Common myeloid progenitor, CD34-positive (primary cell): ENCODE measurements at regions of chr2 and their contacts with region 1.

Region 1: DNA sequence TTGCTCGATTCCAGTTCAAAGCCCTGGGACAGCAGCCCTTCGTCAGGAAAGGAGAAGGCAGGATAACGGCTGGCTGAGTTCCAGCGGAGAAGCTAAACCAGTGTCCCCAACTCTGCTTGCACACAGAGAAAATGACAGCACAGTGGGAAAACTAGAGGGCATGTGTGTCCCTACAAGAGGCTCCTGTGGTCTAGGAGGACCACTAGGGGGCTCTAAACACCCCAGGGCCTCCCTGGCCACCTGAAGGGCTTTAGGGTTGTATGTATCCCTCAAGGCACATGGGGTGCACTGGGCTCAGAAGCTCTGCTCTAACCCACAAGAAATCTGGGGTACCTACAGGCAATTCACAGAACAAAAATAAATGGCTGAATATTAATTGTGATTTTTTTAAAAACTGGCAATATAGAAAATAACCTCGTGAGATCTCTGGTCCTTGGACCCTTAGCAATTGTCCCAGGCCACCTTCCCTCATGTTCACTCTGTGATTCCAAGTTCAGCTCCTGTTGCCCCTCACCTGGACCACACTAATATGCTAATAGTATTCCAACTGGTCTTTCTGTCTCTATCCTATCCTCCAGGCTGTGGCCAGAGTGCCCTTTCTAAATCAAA is 17.5 kb downstream of the STAT1 start:
- DNase-seq: peak; percentile 60 to 76 (median 74)
- H3K4me3 ChIP-seq: no peak overlapping the region
- H3K27ac ChIP-seq: no peak overlapping the region
- H3K4me1 ChIP-seq: no peaks in the 10 kb centered on the region
- H3K27me3 ChIP-seq: no peaks in the 10 kb centered on the region

Region 2: DNA sequence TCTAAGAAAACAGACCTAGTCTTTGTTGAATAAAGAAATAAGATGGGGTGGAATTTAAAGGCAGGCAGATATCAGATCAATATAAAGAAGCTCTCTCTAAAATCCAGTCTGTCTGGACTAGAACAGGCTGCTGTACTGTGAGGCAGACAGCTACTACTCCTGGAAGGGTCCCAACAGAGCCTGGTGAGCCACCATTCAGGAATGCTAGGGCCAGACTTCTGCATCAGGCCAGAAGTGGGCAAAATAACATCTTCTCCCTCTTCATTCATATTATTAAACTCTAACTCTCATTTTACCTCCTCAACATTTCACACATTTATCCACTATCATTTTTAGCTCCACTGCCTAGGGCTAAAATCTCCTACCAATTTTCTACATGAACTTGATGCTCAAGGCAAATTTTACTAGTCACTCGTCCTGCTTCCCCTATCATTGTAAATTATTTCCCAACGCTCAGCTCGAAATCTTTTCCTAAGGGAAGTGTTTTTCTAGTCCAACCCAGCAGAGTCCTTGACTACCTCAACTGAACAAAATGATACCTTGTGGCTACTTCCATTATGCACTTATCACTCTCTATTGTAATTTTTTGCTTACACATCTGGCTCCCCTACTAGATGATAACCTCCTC is 161.0 kb before region 1 on chr2:
- CTCF ChIA-PET with region 1: no interaction called
- POLR2A ChIA-PET with region 1: no interaction called
- DNase-seq: no peak
- H3K4me3 ChIP-seq: no peak overlapping the region
- H3K27ac ChIP-seq: no peak overlapping the region
- H3K4me1 ChIP-seq: no peaks in the 10 kb centered on the region
- H3K27me3 ChIP-seq: no peaks in the 10 kb centered on the region

Region 3: GRCh38 chr2:190986221-190986953 is 10.1 kb before region 1 on chr2:
- CTCF ChIA-PET with region 1: interaction called, 11 read pairs
- POLR2A ChIA-PET with region 1: no interaction called
- DNase-seq: peak; percentile 41 to 79 (median 77)
- H3K4me3 ChIP-seq: peak overlapping the region in 1 of 7 experiments; percentile 34
- H3K27ac ChIP-seq: no peak overlapping the region
- H3K4me1 ChIP-seq: peaks cover 0 to 22% (median 8%) of the 10 kb centered on the region in 4 experiments
- H3K27me3 ChIP-seq: no peaks in the 10 kb centered on the region

Region 4: GRCh38 chr2:191012845-191013681 is 16.6 kb after region 1 on chr2:
- CTCF ChIA-PET with region 1: interaction called, 10 read pairs
- POLR2A ChIA-PET with region 1: no interaction called
- DNase-seq: peak in 1 of 3 donors; percentile 34
- H3K4me3 ChIP-seq: peak overlapping the region; percentile 83 to 100 (median 98)
- H3K27ac ChIP-seq: peak overlapping the region; percentile 82 to 93
- H3K4me1 ChIP-seq: peaks cover 16 to 33% (median 30%) of the 10 kb centered on the region in 4 experiments
- H3K27me3 ChIP-seq: no peaks in the 10 kb centered on the region

Region 5: DNA sequence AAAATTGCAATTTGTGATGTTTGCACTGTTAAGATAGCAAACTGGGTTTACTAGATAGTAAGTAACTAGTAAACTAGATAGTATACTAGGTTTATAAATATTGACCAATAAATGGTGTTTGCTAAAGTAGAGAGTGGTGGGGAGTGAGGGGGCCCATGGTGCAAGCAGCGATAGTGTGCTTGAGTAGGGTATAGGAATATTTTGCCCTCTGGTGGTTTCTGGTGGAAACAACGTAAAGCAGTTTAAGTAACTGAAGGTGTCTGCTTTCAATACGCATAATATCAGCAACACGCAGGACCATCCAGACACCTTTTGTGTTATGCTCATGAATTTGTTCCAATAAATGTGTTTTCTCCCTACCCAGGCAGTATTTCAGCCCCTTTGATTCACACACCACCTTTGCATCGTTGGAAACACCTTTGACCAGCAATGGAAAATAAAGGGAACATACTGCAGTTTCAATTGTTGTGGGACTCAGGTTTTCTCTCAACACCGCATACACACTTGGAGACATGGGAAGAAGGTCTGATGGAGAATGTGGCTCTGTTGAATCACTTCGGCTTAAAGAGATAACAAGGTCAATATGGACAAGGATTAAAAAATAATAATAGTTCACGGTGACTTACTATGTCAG is 34.2 kb after region 1 on chr2:
- CTCF ChIA-PET with region 1: interaction called, 12 read pairs
- POLR2A ChIA-PET with region 1: no interaction called
- DNase-seq: peak; percentile 71 to 73 (median 73)
- H3K4me3 ChIP-seq: no peak overlapping the region
- H3K27ac ChIP-seq: no peak overlapping the region
- H3K4me1 ChIP-seq: peaks cover 3 to 32% (median 16%) of the 10 kb centered on the region in 4 experiments
- H3K27me3 ChIP-seq: no peaks in the 10 kb centered on the region

Region 6: DNA sequence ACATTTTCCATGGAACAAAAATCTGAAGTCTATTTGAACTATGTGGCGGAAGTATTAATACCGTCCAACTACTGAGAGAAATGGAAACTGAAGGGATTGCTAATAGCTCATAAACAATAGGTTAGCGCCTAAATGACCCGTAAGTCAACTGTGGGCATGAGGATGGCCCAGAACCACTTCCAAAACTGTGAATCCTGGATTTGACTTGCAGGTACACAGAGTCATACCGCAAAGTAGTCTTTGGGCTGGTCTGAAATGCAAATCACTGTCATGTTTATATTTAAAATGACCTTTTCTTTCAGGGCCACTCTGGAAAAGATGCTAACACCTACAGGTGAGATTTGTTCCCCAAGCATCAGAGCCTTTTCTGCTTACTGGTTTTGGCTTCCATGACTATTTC is 103.8 kb after region 1 on chr2:
- CTCF ChIA-PET with region 1: no interaction called
- POLR2A ChIA-PET with region 1: no interaction called
- DNase-seq: no peak
- H3K4me3 ChIP-seq: no peak overlapping the region
- H3K27ac ChIP-seq: no peak overlapping the region
- H3K4me1 ChIP-seq: peaks cover 0 to 5% (median 0%) of the 10 kb centered on the region in 4 experiments
- H3K27me3 ChIP-seq: no peaks in the 10 kb centered on the region

Region 7: DNA sequence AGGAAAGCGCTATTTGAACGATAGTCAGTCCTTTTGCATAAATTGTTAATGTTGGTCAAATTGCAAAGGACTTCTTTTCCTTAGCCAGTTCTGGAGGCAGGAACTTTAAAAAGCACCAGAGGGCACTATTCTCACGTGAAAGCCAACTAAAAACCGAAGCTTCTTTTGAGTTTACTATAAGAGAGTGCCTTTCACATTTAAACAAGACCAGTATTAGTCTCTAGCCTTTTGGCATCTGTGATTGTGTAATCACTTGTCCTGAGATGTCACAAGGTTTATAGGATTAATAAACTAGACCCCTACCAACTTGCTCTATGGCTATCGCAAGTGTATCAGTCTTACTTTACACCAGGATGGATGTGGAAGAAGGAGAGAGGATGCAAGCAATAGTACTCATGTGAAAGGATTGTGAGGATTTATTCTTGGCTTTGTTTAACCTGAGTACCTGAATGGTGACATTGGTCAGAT is 168.8 kb after region 1 on chr2:
- CTCF ChIA-PET with region 1: no interaction called
- POLR2A ChIA-PET with region 1: no interaction called
- DNase-seq: peak; percentile 41 to 74 (median 64)
- H3K4me3 ChIP-seq: peak overlapping the region in 1 of 7 experiments; percentile 2
- H3K27ac ChIP-seq: no peak overlapping the region
- H3K4me1 ChIP-seq: no peaks in the 10 kb centered on the region
- H3K27me3 ChIP-seq: no peaks in the 10 kb centered on the region